ENCODE measurements at regions of chr18 and their contacts with region 1.

Region 1: GRCh38 chr18:6741232-6741663 is 11.7 kb downstream of the ARHGAP28 start:
- DNase-seq: peak; percentile 97
- H3K4me3 ChIP-seq: no peak overlapping the region
- H3K27ac ChIP-seq: peak overlapping the region; percentile 85
- H3K4me1 ChIP-seq: peaks cover 22% of the 10 kb centered on the region
- H3K27me3 ChIP-seq: no peaks in the 10 kb centered on the region
- CTCF ChIP-seq: no peak
- POLR2A ChIP-seq: no peak

Region 2: GRCh38 chr18:6598657-6599056 is 142.6 kb before region 1 on chr18:
- CTCF ChIA-PET with region 1: no interaction called
- POLR2A ChIA-PET with region 1: no interaction called
- dilution Hi-C with region 1: no loop called
- intact Hi-C with region 1: no loop called
- DNase-seq: no peak
- H3K4me3 ChIP-seq: no peak overlapping the region
- H3K27ac ChIP-seq: no peak overlapping the region
- H3K4me1 ChIP-seq: no peaks in the 10 kb centered on the region
- H3K27me3 ChIP-seq: no peaks in the 10 kb centered on the region
- CTCF ChIP-seq: no peak
- POLR2A ChIP-seq: no peak

Region 3: DNA sequence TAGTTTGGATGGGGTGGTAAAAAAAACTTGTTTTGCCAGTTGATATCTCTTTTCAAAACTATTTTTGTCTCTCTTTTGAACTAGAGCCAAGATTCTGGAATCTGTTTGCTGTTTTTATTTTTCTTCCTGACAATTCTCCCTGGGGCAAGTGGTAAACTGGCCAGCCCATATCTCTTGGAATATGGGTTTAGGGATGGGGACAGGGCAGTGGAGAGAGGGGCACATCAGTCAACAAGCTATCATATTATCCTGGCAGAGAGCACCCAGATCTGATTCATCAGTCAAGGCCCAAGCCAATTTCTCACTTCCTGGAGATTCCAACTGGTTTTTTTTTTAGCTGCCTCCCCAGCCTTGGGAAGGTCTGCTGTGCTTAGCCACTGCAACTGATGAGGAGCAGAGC is 40.5 kb after region 1 on chr18:
- CTCF ChIA-PET with region 1: interaction called, 3 read pairs
- POLR2A ChIA-PET with region 1: no interaction called
- dilution Hi-C with region 1: no loop called
- intact Hi-C with region 1: loop called (anchors 1 kb)
- DNase-seq: peak; percentile 64
- H3K4me3 ChIP-seq: no peak overlapping the region
- H3K27ac ChIP-seq: peak overlapping the region; percentile 4
- H3K4me1 ChIP-seq: peaks cover 14% of the 10 kb centered on the region
- H3K27me3 ChIP-seq: no peaks in the 10 kb centered on the region
- CTCF ChIP-seq: no peak
- POLR2A ChIP-seq: no peak

Region 4: GRCh38 chr18:6807515-6808257 is 66.4 kb after region 1 on chr18:
- CTCF ChIA-PET with region 1: interaction called, 15 read pairs
- POLR2A ChIA-PET with region 1: interaction called, 7 read pairs
- dilution Hi-C with region 1: no loop called
- intact Hi-C with region 1: loop called (anchors 2 kb)
- DNase-seq: peak; percentile 97
- H3K4me3 ChIP-seq: peak overlapping the region in 2 of 3 experiments; percentile 21 to 34
- H3K27ac ChIP-seq: peak overlapping the region; percentile 100
- H3K4me1 ChIP-seq: peaks cover 33% of the 10 kb centered on the region
- H3K27me3 ChIP-seq: no peaks in the 10 kb centered on the region
- CTCF ChIP-seq: no peak
- POLR2A ChIP-seq: no peak

Region 5: DNA sequence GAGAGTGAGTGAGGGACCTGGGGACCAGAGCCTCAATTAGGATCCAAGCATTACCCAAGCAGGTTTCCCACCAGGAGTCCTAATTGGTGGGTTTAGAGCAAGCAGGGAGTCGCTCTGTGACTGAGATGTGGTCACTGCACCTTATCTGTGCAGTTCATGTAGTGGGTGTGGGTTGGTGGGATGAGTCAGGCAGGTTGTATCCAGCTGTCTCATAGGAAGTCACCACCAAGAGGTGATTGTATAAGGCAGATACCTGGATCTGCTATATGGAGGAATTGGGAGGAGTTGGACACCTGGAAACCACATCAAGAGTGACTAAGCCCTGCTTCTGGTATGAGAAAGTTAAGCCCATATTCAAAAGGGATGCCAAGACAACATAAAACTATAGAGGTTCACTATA is 95.1 kb after region 1 on chr18:
- CTCF ChIA-PET with region 1: no interaction called
- POLR2A ChIA-PET with region 1: no interaction called
- dilution Hi-C with region 1: no loop called
- intact Hi-C with region 1: no loop called
- DNase-seq: no peak
- H3K4me3 ChIP-seq: no peak overlapping the region
- H3K27ac ChIP-seq: no peak overlapping the region
- H3K4me1 ChIP-seq: no peaks in the 10 kb centered on the region
- H3K27me3 ChIP-seq: no peaks in the 10 kb centered on the region
- CTCF ChIP-seq: no peak
- POLR2A ChIP-seq: no peak

Measured in endothelial cell of umbilical vein (primary cell).